ENCODE measurements at regions of chr4 and their contacts with region 1.

Region 1: GRCh38 chr4:165378745-165379677 is at the start of gene CPE:
- DNase-seq: peak; percentile 15 to 68 (median 49)
- ATAC-seq: peak; percentile 98
- H3K4me3 ChIP-seq: peak within 1 kb of the TSS; percentile 4 to 6
- H3K4me3 Mint-ChIP-seq: peak within 1 kb of the TSS; percentile 75
- H3K27ac ChIP-seq: no peak within 1 kb of the TSS
- H3K27ac Mint-ChIP-seq: no peak within 1 kb of the TSS
- H3K4me1 ChIP-seq: no peaks in the 10 kb centered on the region
- H3K4me1 Mint-ChIP-seq: peaks cover 15% of the 10 kb centered on the region
- H3K27me3 ChIP-seq: peaks cover 0 to 8% of the 10 kb centered on the region in 2 experiments
- H3K27me3 Mint-ChIP-seq: peaks cover 63% of the 10 kb centered on the region
- CTCF ChIP-seq: no peak
- total RNA-seq, gene CPE: not detected

Region 2: DNA sequence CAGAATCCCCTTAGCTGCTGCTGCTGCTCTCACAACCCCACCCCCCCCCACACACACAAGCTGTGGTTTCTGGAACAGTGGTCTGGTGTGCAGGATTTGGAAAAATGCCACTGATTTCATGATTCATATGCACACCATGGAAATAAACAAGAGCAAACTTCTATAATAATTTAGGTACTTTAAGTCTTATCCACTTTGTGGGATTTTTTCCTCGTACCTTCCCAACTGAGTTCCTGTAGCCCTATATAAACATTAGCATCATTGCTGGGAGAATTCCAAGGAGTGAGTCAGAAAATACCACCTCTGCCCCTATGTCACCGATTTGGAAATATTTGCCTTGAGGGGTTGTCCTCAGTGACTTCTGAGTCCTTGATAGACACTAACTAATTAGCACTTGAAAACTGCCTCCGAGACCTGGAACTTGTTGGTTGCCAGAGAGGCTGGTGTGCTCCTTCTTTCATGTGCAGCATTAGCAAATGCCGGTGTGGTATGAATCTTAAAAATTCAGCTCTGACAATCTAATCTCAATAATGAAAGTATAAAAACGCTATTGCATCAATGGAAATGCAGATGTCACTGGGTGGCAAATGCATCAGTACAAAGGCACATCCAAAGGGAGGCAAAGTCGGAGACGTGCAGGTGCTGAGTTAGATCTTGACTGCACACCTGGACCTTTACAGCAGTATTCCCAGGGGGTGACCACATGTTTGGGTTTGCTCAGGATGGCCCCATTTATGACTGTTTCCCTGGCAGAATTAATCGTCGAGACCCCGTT is 61.6 kb after region 1 on chr4:
- CTCF ChIA-PET with region 1: no interaction called
- POLR2A ChIA-PET with region 1: no interaction called
- intact Hi-C with region 1: loop called in 1 of 2 experiments (anchors 10 kb)
- DNase-seq: no peak
- ATAC-seq: no peak
- H3K4me3 ChIP-seq: no peak overlapping the region
- H3K4me3 Mint-ChIP-seq: no peak overlapping the region
- H3K27ac ChIP-seq: no peak overlapping the region
- H3K27ac Mint-ChIP-seq: no peak overlapping the region
- H3K4me1 ChIP-seq: no peaks in the 10 kb centered on the region
- H3K4me1 Mint-ChIP-seq: peaks cover 6% of the 10 kb centered on the region
- H3K27me3 ChIP-seq: no peaks in the 10 kb centered on the region
- H3K27me3 Mint-ChIP-seq: peaks cover 6% of the 10 kb centered on the region
- CTCF ChIP-seq: no peak